Activated CD4-positive, alpha-beta T cell treated with anti-CD3 and anti-CD28 coated beads for 36 hours (primary cell): ENCODE measurements at regions of chr19 and their contacts with region 1.

Region 1: DNA sequence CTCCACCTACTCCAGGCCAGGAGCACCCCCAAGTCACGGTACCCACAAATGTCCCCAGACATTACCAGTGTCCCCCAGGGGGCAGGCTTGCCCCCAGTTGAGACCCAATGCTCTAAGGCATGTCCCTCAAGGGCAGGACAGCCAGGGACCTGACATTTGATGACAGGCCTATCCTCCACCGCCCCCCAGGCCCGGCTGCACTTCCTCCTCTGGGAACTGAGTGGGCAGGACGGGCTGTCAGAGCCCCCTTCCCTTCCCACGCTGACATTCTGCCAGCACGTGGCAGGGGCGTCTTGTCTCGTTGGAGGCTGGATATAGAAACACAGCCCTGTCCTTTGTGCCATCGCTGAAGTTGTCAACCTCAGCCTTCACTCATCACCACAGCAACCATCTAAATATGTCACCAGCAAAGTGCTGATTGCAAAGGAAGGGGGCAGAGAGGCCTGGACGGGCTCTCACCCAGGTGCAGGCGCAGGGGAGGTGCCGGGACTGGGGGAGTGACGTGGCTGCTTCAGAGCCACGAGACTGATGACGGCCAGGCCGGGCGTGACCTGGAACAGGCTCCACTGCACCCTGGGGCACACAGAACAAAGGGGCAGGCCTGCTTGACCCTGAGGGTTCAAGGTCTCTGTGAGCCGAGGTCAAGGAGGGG is 38.4 kb downstream of the GNG7 start:
- DNase-seq: peak; percentile 17
- ATAC-seq: no peak
- H3K4me3 Mint-ChIP-seq: no peak overlapping the region
- H3K27ac Mint-ChIP-seq: no peak overlapping the region
- H3K4me1 Mint-ChIP-seq: peaks cover 2% of the 10 kb centered on the region
- H3K27me3 Mint-ChIP-seq: no peaks in the 10 kb centered on the region

Region 2: DNA sequence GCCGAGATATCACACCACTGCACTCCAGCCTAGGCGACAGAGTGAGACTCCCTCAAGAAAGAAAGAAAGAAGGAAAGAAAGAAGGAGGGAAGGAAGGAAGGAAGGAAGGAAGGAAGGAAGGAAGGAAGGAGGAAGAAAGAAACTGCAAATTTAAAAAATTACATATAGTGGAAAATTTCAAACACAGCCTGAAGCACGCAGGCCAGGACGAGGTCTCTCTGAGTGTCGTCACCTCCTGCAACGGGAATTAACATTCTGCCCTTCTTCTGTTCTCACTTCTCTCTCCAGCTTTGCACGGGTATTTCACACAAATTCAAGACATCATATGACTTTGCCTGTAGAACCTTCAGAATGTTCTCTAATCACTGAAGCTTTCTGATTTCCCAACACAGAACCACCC is 69.7 kb before region 1 on chr19:
- CTCF ChIA-PET with region 1: no interaction called
- POLR2A ChIA-PET with region 1: no interaction called
- intact Hi-C with region 1: no loop called
- DNase-seq: no peak
- ATAC-seq: no peak
- H3K4me3 Mint-ChIP-seq: no peak overlapping the region
- H3K27ac Mint-ChIP-seq: no peak overlapping the region
- H3K4me1 Mint-ChIP-seq: peaks cover 11% of the 10 kb centered on the region
- H3K27me3 Mint-ChIP-seq: peaks cover 4% of the 10 kb centered on the region

Region 3: GRCh38 chr19:2750808-2751443 is 86.9 kb after region 1 on chr19:
- CTCF ChIA-PET with region 1: no interaction called
- POLR2A ChIA-PET with region 1: interaction called, 4 read pairs
- intact Hi-C with region 1: loop called in 1 of 2 experiments (anchors 5 kb)
- DNase-seq: no peak
- ATAC-seq: no peak
- H3K4me3 Mint-ChIP-seq: no peak overlapping the region
- H3K27ac Mint-ChIP-seq: no peak overlapping the region
- H3K4me1 Mint-ChIP-seq: peaks cover 9% of the 10 kb centered on the region
- H3K27me3 Mint-ChIP-seq: no peaks in the 10 kb centered on the region

Region 4: DNA sequence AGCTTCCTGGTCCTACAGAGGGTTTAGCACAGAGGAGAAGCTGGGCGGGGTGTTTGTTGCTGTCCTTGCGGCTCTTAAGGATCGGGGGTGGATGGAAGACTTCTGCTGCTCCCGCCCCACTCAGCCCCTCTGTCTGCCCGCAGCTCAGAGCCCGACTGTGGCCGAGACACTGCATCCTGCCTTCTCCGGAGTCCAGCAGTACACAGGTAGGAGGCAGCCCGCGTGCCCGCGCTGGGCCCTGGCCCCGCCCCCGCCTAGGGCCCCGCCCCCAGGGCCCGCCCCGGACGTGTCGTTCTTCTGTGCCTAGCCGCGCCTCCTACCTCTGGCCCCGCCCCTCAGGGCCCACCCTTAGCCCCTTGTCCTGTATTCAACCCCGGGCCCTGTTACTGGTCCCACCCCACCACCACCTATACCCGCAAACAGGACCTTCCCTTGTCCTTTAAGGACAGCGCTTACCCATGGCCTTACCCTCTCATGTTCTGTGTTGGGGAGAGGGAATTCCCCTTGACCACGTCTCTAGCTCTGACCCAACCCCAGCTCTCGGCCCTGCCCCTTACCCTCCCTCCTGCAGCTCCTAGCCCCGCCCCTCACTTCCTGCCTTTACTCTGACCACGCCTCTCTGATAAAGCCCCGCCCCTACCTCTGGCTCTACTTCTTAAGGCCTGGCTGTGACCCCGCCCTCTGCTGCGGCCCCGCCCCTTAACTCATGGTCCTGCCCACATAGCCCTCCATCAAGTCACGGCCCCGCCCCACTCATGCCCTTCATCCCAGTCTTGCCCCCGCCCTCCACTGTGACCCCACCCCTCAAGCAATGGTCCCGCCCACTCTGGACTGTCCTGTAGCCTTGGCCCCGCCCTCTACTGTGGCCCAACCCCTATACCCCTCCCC is 621.0 kb after region 1 on chr19:
- CTCF ChIA-PET with region 1: no interaction called
- POLR2A ChIA-PET with region 1: no interaction called
- intact Hi-C with region 1: no loop called
- DNase-seq: peak; percentile 94
- ATAC-seq: peak; percentile 91
- H3K4me3 Mint-ChIP-seq: peak overlapping the region; percentile 51
- H3K27ac Mint-ChIP-seq: no peak overlapping the region
- H3K4me1 Mint-ChIP-seq: peaks cover 12% of the 10 kb centered on the region
- H3K27me3 Mint-ChIP-seq: peaks cover 19% of the 10 kb centered on the region